HAP-1 (cell line): ENCODE measurements at regions of chr2 and their contacts with region 1.

Region 1: DNA sequence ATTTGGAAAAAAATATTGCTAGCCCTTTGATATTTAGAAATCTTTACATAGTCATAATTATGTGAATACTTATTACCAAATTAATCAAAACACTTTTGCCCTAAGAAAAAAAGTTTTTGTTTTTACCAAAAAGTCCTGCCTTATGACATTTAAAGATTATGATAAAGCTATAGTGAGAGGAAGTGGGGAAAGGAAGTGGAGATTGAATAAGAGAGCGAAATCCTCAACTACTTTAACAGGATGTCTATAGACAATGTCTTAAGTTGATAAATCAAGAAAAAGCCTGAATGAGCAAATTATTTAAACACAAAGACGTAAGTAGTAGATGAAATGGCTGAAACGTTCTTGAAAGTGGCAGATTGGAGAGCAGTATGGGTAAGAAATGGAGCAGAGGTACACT is 20.9 kb upstream of the VPS54 start:
- DNase-seq: no peak
- H3K4me3 ChIP-seq: no peak overlapping the region
- H3K4me1 ChIP-seq: peaks cover 9% of the 10 kb centered on the region
- H3K27me3 ChIP-seq: no peaks in the 10 kb centered on the region

Region 2: GRCh38 chr2:63692002-63692606 is 348.1 kb before region 1 on chr2:
- in situ Hi-C with region 1: no loop called
- DNase-seq: peak; percentile 15 to 44
- H3K4me3 ChIP-seq: no peak overlapping the region
- H3K4me1 ChIP-seq: no peaks in the 10 kb centered on the region
- H3K27me3 ChIP-seq: no peaks in the 10 kb centered on the region

Region 3: DNA sequence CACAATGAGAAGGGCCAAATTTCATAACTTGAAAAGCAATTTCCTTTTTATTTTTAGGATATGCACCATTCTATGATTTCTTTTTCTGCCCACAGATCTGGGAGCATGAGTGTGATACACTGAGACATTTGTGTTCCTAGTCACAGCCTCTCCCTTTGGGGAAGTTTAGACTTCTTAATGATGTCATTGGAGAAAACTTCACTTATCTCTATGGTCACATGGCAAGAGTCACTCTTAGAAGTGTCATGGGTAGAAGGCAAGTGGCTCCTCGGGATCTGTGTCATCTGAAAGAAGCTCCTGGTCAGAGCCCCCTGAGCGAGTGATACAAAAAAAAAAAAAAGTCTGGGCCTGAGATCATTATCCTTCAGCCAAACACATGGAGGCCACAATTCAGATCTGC is 351.3 kb after region 1 on chr2:
- in situ Hi-C with region 1: no loop called
- DNase-seq: no peak
- H3K4me3 ChIP-seq: no peak overlapping the region
- H3K4me1 ChIP-seq: no peaks in the 10 kb centered on the region
- H3K27me3 ChIP-seq: no peaks in the 10 kb centered on the region

Region 4: DNA sequence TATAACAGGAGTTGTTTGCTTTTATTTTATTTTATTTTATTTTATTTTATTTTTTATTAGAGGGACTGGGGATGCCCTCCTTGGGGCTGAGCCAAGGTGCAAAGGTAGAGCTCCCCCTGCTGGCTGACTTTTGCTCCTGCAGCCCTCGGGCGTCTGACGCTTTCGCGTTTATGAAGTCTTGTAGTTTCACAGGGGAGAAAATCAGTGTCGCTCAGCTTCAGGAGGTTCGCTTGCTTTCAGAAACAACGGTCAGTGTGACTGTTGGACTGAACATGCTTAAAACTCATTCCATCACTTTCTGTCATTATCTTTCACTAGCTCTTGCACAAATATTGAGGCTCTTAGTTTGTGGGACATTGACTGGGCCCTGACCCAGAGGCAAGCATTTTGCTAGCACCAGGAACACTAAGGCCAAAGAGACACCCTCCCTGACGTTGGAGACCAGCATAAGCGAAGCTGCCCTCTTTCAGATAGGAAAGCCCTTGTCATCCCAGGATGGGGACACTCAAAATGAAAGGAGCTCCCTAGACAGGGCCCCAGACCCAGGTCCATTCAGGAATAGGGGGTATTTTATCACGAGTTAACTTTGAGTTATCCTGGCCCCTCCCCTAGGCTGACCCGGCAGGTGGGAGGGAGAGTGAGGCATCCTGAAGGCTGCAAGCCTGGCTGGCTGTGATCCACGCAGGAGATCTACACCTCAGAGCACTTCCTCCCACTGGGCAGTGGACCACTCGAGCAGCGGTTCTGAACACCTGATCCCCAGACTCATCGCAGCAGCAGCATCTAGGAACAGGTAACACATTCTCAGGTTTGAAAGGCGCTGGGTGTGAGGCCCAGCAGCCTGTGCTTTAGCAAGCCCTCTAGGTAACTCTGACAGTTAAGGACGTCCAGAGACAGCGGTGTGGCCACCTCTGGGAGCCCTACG is 448.2 kb after region 1 on chr2:
- in situ Hi-C with region 1: loop called (anchors 10 kb)
- DNase-seq: peak; percentile 66 to 89
- H3K4me3 ChIP-seq: no peak overlapping the region
- H3K4me1 ChIP-seq: peaks cover 7% of the 10 kb centered on the region
- H3K27me3 ChIP-seq: no peaks in the 10 kb centered on the region